ENCODE measurements at regions of chr10 and their contacts with region 1.

Region 1: DNA sequence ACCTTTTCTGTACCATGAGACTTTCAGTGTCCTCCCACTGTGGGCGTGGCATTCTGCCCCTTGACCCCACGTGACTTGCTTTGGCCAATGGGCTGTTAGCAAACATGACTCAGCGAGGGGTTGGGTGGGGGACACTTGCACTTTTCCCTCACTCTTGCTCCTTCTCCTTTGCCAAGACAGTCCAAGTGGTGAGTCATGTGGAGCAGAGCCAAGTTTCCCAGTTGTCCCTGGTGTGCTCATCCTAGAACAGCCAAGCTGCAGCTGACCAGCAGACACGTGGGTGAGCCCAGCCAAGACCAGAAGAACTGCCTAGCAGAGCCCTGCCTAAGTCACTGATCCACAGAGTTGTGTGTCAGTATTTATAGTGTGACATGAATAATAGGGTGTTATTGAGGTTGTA is 82.8 kb upstream of the CPXM2 start:
- DNase-seq: no peak
- H3K4me3 ChIP-seq: no peak overlapping the region
- CTCF ChIP-seq: no peak

Region 2: DNA sequence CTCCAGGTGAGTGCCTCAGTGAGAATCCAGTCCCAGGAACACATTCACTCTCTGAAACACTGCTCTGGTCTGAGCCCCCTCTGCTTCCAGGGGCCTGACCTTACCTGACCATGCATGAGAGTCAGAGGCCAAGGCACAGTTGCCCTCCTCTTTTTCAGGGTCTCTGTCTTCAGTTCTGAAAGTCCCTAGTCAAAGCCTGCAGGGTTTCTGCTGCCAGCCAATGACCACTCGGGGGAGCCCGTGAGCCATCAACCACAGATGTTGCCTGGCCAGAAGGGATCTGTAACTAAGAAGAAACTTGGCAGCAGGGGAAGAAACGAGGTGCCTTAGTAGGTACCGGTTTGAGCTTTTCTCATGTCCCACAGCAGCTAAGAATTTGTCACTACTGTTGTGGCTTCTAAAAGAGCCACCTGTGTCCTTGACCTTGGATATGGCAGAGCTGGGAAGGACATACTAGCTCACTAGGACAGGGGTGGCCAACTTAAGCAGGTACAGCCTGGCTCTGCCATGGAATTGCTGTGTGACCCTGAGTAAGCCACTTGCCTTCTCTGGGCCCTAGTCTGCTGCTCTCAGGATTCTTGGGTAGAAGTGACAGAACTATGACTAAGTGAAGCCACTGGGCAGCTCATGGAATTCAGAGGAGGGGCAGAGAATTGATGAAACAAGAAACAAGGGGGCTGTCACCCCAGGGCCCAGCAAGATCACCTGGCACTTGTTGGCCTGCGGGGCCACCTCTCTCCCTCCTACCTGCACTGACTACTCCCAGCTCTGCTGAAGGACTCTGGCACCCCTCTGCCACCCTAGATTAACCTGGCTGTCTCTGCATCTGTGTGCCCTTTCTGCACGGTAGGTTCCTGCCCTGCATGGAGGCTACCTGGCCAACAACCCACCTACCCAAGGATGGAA is 392.1 kb before region 1 on chr10:
- CTCF ChIA-PET with region 1: interaction called, 311 read pairs
- POLR2A ChIA-PET with region 1: no interaction called
- DNase-seq: peak; percentile 19
- H3K4me3 ChIP-seq: no peak overlapping the region
- CTCF ChIP-seq: peak; percentile 90

Region 3: GRCh38 chr10:123986742-123987141 is 12.3 kb after region 1 on chr10:
- CTCF ChIA-PET with region 1: no interaction called
- POLR2A ChIA-PET with region 1: no interaction called
- DNase-seq: no peak
- H3K4me3 ChIP-seq: no peak overlapping the region
- CTCF ChIP-seq: no peak

Measured in AG04449 (cell line).